Left ventricle myocardium superior (tissue), 1 donor: ENCODE measurements at regions of chr3 and their contacts with region 1.

Region 1: GRCh38 chr3:36868614-36869436 is 76.0 kb downstream of the TRANK1 start:
- DNase-seq: no peak
- ATAC-seq: peak; percentile 73

Region 2: DNA sequence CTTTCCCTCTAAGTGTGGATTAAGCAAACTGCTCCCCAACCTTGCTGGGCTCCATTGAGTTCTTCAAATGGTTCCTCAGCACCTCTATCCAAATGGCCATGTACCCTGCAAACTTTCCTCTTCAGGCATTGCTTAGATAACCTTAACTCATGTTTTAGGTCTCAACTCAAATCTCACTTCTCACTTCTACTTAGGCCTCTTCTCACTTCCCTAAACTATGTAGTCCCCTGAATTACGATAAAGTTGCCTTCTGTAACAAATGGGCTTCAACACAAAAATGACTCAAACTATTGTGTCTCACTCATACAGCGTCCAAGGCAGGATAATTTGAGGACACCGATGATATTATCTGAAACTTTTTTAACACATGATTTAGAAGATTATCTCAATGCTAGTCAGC is 550.9 kb before region 1 on chr3:
- intact Hi-C with region 1: no loop called
- DNase-seq: no peak
- ATAC-seq: no peak

Region 3: DNA sequence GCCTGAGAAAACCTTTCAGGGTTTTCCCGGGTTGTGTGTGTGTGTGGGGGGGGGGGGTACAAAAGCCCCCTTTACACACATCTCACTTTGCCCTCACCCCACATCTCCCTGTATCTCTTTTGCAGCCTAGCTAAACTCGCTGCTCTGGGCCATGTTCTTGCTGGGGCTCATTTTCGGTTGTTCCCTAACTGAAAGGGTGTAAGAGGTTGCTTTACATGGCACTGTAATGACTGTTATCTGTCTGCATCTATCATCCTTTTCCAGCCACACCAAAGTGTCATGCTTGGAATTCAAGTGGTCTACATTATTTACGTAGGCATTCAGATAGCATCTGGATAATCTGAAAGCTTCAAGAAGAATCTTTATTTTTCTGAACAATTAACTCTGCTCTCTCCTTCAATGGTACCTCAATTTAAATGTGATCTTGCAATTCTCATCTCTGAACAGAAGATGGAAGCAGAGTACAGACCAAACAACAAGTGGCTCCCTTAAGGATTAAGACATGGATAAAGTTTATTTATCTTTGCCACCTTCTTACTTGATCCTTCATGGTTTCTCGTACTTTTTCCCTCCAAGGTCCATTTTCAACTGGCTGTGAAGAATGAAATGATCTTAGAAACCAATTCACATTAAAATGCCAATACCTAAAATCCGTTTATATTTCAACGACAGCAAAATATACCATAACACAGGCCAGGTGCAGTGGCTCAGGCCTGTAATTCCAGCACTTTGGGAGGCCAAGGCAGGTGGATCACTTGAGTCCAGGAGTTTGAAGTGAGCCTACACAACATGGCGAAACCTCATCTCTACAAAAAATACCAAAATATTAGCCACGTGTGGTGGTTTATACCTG is 139.4 kb before region 1 on chr3:
- intact Hi-C with region 1: loop called (anchors 5 kb)
- DNase-seq: no peak
- ATAC-seq: peak; percentile 61

Region 4: DNA sequence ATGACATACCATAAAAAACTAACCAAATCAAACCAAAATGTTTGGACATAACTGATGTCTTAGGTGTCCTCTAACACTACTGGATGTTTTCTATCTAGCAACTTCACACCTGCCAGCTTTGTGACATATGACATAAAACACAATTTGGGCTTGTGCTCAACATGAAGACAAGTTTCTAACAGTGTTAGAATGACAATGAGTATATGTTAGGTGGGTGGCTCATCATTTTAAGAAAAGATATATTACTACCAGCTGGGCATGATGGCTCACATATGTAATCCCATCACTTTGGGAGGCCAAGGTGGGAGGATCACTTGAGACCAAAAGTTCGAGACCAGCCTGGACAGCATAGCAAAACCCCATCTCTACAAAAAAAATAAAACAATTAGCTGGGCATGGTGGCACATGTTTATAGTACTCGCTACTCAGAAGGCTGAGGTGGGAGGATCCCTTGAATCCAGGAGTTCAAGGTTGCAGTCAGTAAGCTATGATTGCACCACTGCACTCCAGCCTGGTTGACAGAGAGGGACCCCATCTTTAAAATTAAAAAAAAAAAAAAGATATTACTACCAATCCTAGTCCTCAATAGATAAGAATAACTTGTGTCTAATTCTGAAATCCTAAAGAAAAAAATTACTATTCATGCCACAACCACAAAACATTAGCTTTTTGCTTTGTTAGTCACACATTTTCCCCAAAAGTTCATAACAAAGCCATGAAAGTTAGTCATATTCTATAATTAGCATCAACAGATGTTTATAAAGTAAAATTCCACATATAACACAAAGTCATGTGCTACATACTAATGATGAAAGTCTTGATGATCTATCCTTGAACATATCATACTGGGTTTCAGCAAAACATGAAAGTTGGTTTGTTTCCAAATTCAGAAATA is 245.7 kb after region 1 on chr3:
- intact Hi-C with region 1: no loop called
- DNase-seq: no peak
- ATAC-seq: no peak